CD8-positive, alpha-beta T cell (primary cell): ENCODE measurements at regions of chr6 and their contacts with region 1.

Region 1: DNA sequence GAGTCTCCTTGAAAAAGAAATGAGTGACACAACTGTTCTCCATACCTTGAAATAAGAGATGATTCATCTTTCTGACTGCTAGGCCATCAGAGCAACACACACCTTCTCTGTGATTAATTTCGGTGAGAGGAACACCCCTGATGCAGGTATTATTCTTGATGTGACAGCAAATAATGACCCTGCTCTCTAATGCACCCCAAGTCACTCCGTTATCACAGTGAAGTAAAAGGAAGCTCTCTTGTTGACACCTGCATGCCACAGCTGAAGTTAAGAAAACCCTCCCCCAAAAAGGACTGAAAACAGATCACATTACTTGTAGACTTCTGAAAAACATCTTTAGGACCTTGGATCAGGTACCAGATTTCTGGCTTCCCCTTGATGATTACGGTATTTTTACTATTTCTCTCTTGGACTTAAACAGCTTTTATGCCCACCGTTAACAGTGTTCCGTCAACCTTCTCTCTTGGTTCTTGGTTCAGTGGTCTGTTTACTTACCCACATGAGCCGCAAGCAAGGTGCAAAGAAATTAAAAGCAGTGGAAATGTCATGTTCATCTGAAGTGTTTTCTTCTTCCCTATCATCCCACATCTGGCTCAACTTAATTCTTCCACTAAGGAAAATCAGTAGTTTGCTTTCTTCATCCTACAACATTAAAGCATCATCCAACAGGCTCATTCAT is 249.7 kb downstream of the GMPR start:
- DNase-seq: peak in 2 of 9 experiments; percentile 48 to 72
- ATAC-seq: peak; percentile 43
- H3K4me3 ChIP-seq: no peak overlapping the region
- H3K4me3 Mint-ChIP-seq: peak overlapping the region; percentile 66
- H3K27ac ChIP-seq: peak overlapping the region in 1 of 2 experiments; percentile 65
- H3K27ac Mint-ChIP-seq: peak overlapping the region; percentile 90
- H3K4me1 ChIP-seq: peaks cover 63% of the 10 kb centered on the region
- H3K4me1 Mint-ChIP-seq: peaks cover 79% of the 10 kb centered on the region
- H3K27me3 ChIP-seq: no peaks in the 10 kb centered on the region
- H3K27me3 Mint-ChIP-seq: no peaks in the 10 kb centered on the region
- CTCF ChIP-seq: no peak

Region 2: GRCh38 chr6:16122197-16122596 is 365.9 kb before region 1 on chr6:
- CTCF ChIA-PET with region 1: no interaction called
- POLR2A ChIA-PET with region 1: no interaction called
- intact Hi-C with region 1: no loop called
- DNase-seq: no peak
- ATAC-seq: no peak
- H3K4me3 ChIP-seq: no peak overlapping the region
- H3K4me3 Mint-ChIP-seq: no peak overlapping the region
- H3K27ac ChIP-seq: no peak overlapping the region
- H3K27ac Mint-ChIP-seq: no peak overlapping the region
- H3K4me1 ChIP-seq: no peaks in the 10 kb centered on the region
- H3K4me1 Mint-ChIP-seq: no peaks in the 10 kb centered on the region
- H3K27me3 ChIP-seq: no peaks in the 10 kb centered on the region
- H3K27me3 Mint-ChIP-seq: peaks cover 4% of the 10 kb centered on the region
- CTCF ChIP-seq: no peak

Region 3: DNA sequence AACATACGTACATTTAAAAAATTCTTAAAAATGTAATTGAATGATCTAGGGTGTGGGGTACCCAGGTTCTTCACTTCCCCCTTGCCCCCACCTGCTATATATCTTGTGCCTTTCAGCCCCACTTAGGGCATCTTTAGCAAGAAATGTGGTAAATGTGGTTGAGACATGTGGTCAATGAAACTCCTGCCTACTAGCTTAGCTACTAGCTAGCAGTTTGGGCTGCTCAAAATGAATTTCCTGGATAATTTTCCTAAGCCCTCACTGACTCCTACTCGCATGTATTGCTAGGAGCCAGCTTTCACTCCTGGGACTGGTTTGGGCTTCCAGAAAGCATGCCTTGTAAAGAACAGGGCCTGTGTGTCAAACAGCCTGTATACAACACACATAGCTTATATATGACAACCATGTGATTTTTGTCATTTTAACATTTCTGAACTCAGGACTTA is 15.9 kb after region 1 on chr6:
- CTCF ChIA-PET with region 1: interaction called, 4 read pairs
- POLR2A ChIA-PET with region 1: interaction called, 6 read pairs
- intact Hi-C with region 1: loop called in 1 of 2 experiments (anchors 2 kb)
- DNase-seq: peak in 3 of 9 experiments; percentile 27 to 77 (median 63)
- ATAC-seq: peak; percentile 86
- H3K4me3 ChIP-seq: no peak overlapping the region
- H3K4me3 Mint-ChIP-seq: no peak overlapping the region
- H3K27ac ChIP-seq: no peak overlapping the region
- H3K27ac Mint-ChIP-seq: peak overlapping the region; percentile 34
- H3K4me1 ChIP-seq: peaks cover 21% of the 10 kb centered on the region
- H3K4me1 Mint-ChIP-seq: peaks cover 27% of the 10 kb centered on the region
- H3K27me3 ChIP-seq: no peaks in the 10 kb centered on the region
- H3K27me3 Mint-ChIP-seq: no peaks in the 10 kb centered on the region
- CTCF ChIP-seq: no peak